Activated CD4-positive, alpha-beta T cell treated with anti-CD3 and anti-CD28 coated beads, Interleukin-2, amount 10 ng/mL, durations not matched to agents 24 days and 14 days (primary cell): ENCODE measurements at regions of chr6 and their contacts with region 1.

Region 1: DNA sequence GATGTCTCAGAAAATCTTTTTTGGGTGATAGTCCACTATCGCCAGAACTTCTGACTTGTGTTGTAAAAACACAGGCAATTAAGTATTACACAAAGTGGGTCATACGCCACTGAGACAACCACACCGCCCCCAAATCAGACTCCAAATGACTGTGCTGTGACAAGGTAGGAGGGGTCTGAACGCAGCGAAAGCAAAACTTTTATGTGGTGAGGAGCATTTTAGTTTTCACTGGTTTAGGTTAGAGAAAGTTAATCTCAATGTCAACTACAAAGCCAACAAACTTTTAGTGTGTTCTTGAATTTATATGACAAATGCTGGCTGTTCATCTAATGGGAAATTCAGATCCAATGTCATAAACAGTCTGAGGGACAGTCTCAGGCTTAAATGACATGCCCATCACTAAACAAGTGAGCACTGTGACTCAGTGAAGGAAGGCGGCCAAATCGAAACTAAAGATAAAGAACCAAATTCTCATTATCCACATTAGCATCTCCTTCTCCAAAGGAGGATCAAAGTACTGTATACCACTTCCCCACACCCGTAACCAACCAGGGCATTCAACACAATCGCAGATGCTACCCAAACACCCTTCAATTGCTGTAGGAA is 186.7 kb downstream of the GJA10 start:
- DNase-seq: peak; percentile 94
- H3K4me3 Mint-ChIP-seq: peak overlapping the region; percentile 87
- H3K27ac Mint-ChIP-seq: peak overlapping the region; percentile 94
- H3K4me1 Mint-ChIP-seq: peaks cover 77% of the 10 kb centered on the region
- H3K27me3 Mint-ChIP-seq: no peaks in the 10 kb centered on the region

Region 2: GRCh38 chr6:89475634-89476033 is 605.3 kb before region 1 on chr6:
- intact Hi-C with region 1: no loop called
- DNase-seq: peak; percentile 82
- H3K4me3 Mint-ChIP-seq: peak overlapping the region; percentile 64
- H3K27ac Mint-ChIP-seq: peak overlapping the region; percentile 73
- H3K4me1 Mint-ChIP-seq: peaks cover 16% of the 10 kb centered on the region
- H3K27me3 Mint-ChIP-seq: peaks cover 6% of the 10 kb centered on the region

Region 3: DNA sequence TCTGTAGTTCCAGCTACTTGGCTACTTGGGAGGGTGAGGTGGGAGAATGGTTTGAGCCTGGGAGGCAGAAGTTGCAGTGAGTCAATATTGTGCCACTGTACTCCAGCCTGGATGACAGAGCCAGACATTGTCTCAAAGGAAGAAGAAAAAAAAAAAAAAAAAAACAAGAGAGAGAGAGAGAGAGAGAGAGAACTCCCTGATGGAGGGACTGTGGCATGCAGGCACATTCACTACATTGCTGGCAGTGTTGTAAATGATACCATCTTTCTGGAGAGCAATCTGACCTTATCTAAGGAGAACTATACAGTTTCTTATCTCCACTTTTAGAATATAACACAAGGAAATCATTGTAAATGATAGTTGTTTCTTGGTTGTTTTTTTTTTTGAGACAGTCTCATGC is 346.5 kb before region 1 on chr6:
- intact Hi-C with region 1: no loop called
- DNase-seq: no peak
- H3K4me3 Mint-ChIP-seq: no peak overlapping the region
- H3K27ac Mint-ChIP-seq: no peak overlapping the region
- H3K4me1 Mint-ChIP-seq: peaks cover 3% of the 10 kb centered on the region
- H3K27me3 Mint-ChIP-seq: no peaks in the 10 kb centered on the region

Region 4: DNA sequence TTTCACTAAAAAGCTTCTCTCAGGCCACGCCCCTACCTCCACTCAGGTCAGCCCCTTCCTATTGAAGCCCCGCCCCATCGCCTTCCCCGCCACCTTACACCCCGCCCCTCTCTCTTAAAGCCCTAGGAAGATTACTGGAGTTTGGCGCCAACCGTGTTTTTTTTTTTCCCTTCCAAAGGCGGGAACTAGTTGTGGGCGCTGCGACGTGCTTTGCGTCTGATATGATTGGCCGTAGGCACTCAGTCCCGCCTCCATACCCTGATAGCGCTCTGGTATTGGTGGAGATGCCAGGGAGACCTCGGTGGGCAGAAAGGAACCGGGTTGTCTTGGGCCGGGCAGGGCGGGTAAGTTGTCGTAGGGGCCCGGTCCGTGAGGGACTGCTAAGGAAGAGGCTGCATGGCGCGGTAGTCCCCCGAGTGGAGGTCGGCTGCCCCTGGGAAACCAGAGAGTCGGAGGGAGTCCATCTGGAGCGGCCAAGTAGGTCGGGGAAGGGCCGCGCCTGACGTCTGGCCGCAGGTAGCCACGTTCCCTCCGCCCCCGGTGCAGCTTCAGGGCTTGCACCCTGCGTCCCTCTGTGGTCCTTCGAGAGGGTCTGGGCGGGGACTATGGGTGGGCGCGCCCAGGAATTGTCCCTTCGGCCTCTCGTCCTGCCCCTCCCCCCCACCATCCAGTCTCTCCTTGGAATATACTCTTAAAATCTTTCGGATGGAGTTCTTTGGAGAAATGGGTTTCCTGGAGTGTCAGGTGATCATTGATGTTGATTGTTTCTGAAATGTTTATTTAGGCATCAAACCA is 251.2 kb before region 1 on chr6 and contains the start of gene CASP8AP2:
- intact Hi-C with region 1: loop called (anchors 1 kb)
- DNase-seq: peak; percentile 98
- H3K4me3 Mint-ChIP-seq: peak within 1 kb of the TSS; percentile 99
- H3K27ac Mint-ChIP-seq: peak within 1 kb of the TSS; percentile 98
- H3K4me1 Mint-ChIP-seq: peaks cover 25% of the 10 kb centered on the region
- H3K27me3 Mint-ChIP-seq: no peaks in the 10 kb centered on the region
- total RNA-seq, gene CASP8AP2: 37.3 and 37.8 TPM in 2 replicates

Region 5: GRCh38 chr6:90025523-90026061 is 55.4 kb before region 1 on chr6:
- intact Hi-C with region 1: loop called (anchors 1 kb)
- DNase-seq: peak; percentile 72
- H3K4me3 Mint-ChIP-seq: peak overlapping the region; percentile 56
- H3K27ac Mint-ChIP-seq: peak overlapping the region; percentile 90
- H3K4me1 Mint-ChIP-seq: peaks cover 66% of the 10 kb centered on the region
- H3K27me3 Mint-ChIP-seq: no peaks in the 10 kb centered on the region

Region 6: GRCh38 chr6:90144396-90144795 is 63.4 kb after region 1 on chr6:
- intact Hi-C with region 1: loop called (anchors 1 kb)
- DNase-seq: no peak
- H3K4me3 Mint-ChIP-seq: peak overlapping the region; percentile 59
- H3K27ac Mint-ChIP-seq: peak overlapping the region; percentile 92
- H3K4me1 Mint-ChIP-seq: peaks cover 54% of the 10 kb centered on the region
- H3K27me3 Mint-ChIP-seq: no peaks in the 10 kb centered on the region

Region 7: DNA sequence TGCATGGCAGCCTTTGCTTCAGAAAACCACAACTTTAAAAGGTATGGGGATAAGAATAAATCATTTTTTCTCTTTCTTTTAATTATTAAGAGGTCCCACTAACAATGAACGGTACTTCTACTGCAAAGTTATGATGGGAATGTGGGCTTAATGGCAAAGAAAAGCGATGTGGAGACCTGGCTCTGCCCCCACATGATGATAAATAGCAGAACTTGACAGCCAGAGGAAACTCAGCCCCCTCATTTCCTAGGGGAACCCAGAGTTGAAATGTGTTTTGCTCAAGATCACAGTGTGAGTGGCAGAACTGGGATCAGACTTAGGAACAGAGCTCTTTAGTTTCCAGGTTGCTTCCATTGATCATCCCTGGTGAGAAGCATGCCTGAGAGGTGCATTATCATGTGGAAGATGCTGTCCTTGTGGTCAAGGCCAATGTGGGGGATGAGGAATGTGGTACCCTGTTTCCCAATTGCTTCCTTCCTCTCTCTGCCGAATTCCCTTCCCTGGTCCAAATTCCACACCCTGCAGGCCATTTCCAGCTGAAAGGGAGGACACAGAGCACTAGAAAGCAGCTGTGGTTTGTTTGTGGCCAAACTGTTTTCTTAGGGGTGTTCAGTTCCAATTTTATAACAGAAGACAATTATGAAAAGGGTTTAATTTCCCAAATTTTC is 149.7 kb after region 1 on chr6:
- intact Hi-C with region 1: loop called (anchors 1 kb)
- DNase-seq: no peak
- H3K4me3 Mint-ChIP-seq: peak overlapping the region; percentile 56
- H3K27ac Mint-ChIP-seq: peak overlapping the region; percentile 30
- H3K4me1 Mint-ChIP-seq: peaks cover 78% of the 10 kb centered on the region
- H3K27me3 Mint-ChIP-seq: no peaks in the 10 kb centered on the region

Region 8: DNA sequence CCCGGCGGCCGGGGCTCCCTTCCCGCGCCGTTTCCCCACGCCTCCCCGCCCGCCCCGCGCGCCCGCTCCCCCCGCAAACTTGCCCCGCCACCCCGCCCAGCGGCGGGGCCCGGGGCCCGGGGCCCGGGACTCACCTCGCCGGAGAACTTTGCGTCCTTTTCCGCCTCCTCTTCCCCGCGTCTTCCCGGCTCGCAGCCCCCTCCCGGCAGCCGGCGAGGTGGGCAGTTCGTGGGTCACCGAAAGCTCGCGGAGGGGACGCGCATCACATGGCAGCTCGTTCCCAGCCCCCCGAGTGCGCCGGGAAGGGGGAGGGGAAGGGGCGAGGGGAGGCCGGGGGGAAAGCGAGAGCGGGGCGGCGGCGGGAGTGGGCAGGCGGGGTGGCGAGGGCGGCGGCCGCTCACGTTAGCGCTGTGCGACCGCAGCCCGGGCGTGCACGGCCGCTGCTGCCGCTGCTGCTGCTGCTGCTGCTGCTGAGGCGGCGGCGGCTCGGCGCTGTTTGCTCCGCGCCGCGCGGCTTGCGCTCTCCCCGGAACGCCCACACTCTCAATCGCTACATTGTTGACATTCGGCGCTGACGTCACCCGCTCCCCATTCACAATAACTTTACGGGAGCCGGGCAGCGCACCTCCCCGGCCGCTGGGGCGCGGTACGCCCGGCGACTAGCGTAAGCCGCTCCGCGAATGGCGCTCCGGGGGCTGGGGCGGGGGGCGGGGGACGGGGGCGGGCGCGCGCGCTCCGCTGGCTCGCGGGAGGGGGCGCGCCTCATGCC is 215.6 kb after region 1 on chr6 and contains the start of gene BACH2:
- intact Hi-C with region 1: loop called (anchors 1 kb)
- DNase-seq: peak; percentile 97
- H3K4me3 Mint-ChIP-seq: peak within 1 kb of the TSS; percentile 94
- H3K27ac Mint-ChIP-seq: peak within 1 kb of the TSS; percentile 95
- H3K4me1 Mint-ChIP-seq: peaks cover 40% of the 10 kb centered on the region
- H3K27me3 Mint-ChIP-seq: peaks cover 23% of the 10 kb centered on the region
- total RNA-seq, gene BACH2: 69.0 and 69.2 TPM in 2 replicates